B cell (primary cell): ENCODE measurements at regions of chr19 and their contacts with region 1.

Region 1: DNA sequence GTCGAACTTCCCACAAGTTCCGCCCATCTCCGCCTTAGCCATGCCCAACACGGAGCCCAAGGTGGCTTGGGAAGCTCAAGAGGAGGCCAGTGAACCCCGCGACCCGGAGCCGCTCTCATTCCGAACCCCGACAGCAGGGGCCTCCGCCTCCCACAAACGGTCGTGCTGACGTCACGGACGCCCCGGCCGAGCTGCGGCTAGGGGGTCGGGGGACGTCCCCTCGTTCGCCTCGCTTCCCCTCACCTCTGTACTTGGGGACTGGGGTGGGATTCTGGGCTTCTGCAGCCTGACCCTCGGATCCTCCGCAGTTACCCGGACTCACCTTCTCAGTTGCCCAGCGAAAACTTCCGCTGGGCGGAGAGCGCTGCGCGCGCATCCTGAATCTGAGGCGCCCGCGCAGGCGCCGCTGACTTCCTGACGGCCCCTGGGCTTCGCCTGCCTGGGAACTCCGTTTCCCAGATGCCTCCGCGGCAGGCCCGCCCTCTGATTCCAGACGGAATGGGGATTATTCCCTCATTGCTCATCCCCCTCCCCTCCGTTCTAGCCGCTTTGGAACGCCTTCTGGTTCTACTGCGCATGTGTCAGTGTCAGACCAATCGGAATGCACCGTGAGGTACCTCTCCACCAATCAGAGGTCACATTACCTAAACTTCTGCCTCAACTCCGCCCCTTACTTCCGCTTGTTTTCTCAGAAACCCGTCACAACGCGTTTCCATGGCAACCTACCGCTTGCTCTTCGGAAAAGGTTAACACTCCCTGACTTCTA is at the start of gene VRK3:
- DNase-seq: peak; percentile 100
- ATAC-seq: peak; percentile 86
- H3K4me3 ChIP-seq: peak within 1 kb of the TSS; percentile 76 to 96 (median 94)
- H3K4me3 Mint-ChIP-seq: peak within 1 kb of the TSS; percentile 94
- H3K27ac ChIP-seq: peak within 1 kb of the TSS; percentile 96 to 98
- H3K27ac Mint-ChIP-seq: peak within 1 kb of the TSS; percentile 97
- H3K4me1 ChIP-seq: peaks cover 15 to 36% of the 10 kb centered on the region in 2 donors
- H3K4me1 Mint-ChIP-seq: peaks cover 41% of the 10 kb centered on the region
- H3K27me3 ChIP-seq: no peaks in the 10 kb centered on the region
- H3K27me3 Mint-ChIP-seq: no peaks in the 10 kb centered on the region
- CTCF ChIP-seq: no peak
- total RNA-seq, gene VRK3: 112 and 123 TPM in 2 replicates

Region 2: GRCh38 chr19:48468775-48469288 is 1556.4 kb before region 1 on chr19:
- CTCF ChIA-PET with region 1: no interaction called
- POLR2A ChIA-PET with region 1: no interaction called
- intact Hi-C with region 1: loop called (anchors 2 kb)
- DNase-seq: peak; percentile 100
- ATAC-seq: peak; percentile 87
- H3K4me3 ChIP-seq: peak overlapping the region; percentile 8 to 90 (median 83)
- H3K4me3 Mint-ChIP-seq: peak overlapping the region; percentile 92
- H3K27ac ChIP-seq: peak overlapping the region; percentile 52 to 84
- H3K27ac Mint-ChIP-seq: peak overlapping the region; percentile 89
- H3K4me1 ChIP-seq: peaks cover 11 to 15% of the 10 kb centered on the region in 2 donors
- H3K4me1 Mint-ChIP-seq: peaks cover 17% of the 10 kb centered on the region
- H3K27me3 ChIP-seq: peaks cover 0 to 3% (median 0%) of the 10 kb centered on the region in 4 experiments
- H3K27me3 Mint-ChIP-seq: no peaks in the 10 kb centered on the region
- CTCF ChIP-seq: no peak

Region 3: GRCh38 chr19:48720613-48721296 is 1304.5 kb before region 1 on chr19:
- CTCF ChIA-PET with region 1: no interaction called
- POLR2A ChIA-PET with region 1: no interaction called
- intact Hi-C with region 1: loop called (anchors 10 kb)
- DNase-seq: peak; percentile 93
- ATAC-seq: peak; percentile 86
- H3K4me3 ChIP-seq: peak overlapping the region; percentile 47 to 91 (median 75)
- H3K4me3 Mint-ChIP-seq: peak overlapping the region; percentile 98
- H3K27ac ChIP-seq: peak overlapping the region; percentile 92 to 93
- H3K27ac Mint-ChIP-seq: peak overlapping the region; percentile 98
- H3K4me1 ChIP-seq: peaks cover 10 to 25% of the 10 kb centered on the region in 2 donors
- H3K4me1 Mint-ChIP-seq: peaks cover 21% of the 10 kb centered on the region
- H3K27me3 ChIP-seq: no peaks in the 10 kb centered on the region
- H3K27me3 Mint-ChIP-seq: no peaks in the 10 kb centered on the region
- CTCF ChIP-seq: no peak

Region 4: DNA sequence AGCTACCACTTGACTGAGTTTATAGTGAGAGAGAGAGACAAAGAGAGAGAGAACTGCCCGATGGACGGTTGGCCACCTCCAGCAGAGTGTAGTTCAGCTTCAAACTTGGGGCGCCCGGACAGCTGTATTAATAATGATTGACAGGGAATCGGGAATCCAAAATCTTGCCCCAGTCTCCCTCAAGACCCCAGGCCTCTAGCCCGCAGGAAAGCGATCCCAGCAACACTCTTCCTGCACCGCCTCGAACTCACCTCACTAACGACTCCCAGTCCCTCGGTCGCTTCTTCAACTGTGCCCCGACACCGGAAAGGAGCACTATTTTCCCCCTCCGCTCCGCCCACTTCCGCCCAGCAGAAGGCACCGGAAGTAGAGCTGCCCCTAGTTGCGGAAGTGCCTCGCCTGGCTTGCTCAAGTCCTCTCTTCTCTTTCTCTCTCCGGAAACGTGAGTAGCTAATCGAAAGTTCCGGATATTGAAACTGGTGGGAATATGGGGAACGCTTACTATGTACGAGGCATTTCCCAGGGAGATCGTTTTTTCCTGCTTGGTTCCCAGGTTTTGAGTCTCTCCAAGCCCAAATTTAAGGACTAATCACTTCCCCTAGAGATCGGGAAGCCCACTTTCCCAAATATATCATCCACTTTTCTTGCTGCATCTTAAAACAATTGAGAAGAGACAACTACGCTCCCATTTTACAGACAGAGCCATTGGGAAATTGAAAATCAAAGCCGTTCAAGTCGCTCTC is 444.8 kb before region 1 on chr19 and contains the start of gene NOSIP:
- CTCF ChIA-PET with region 1: no interaction called
- POLR2A ChIA-PET with region 1: no interaction called
- intact Hi-C with region 1: loop called (anchors 10 kb)
- DNase-seq: peak; percentile 97
- ATAC-seq: peak; percentile 95
- H3K4me3 ChIP-seq: peak within 1 kb of the TSS; percentile 61 to 92 (median 87)
- H3K4me3 Mint-ChIP-seq: peak within 1 kb of the TSS; percentile 89
- H3K27ac ChIP-seq: peak within 1 kb of the TSS; percentile 5 to 74
- H3K27ac Mint-ChIP-seq: peak within 1 kb of the TSS; percentile 88
- H3K4me1 ChIP-seq: peaks cover 16 to 23% of the 10 kb centered on the region in 2 donors
- H3K4me1 Mint-ChIP-seq: peaks cover 29% of the 10 kb centered on the region
- H3K27me3 ChIP-seq: no peaks in the 10 kb centered on the region
- H3K27me3 Mint-ChIP-seq: no peaks in the 10 kb centered on the region
- CTCF ChIP-seq: no peak
- total RNA-seq, gene NOSIP: 55.5 and 65.2 TPM in 2 replicates

Region 5: DNA sequence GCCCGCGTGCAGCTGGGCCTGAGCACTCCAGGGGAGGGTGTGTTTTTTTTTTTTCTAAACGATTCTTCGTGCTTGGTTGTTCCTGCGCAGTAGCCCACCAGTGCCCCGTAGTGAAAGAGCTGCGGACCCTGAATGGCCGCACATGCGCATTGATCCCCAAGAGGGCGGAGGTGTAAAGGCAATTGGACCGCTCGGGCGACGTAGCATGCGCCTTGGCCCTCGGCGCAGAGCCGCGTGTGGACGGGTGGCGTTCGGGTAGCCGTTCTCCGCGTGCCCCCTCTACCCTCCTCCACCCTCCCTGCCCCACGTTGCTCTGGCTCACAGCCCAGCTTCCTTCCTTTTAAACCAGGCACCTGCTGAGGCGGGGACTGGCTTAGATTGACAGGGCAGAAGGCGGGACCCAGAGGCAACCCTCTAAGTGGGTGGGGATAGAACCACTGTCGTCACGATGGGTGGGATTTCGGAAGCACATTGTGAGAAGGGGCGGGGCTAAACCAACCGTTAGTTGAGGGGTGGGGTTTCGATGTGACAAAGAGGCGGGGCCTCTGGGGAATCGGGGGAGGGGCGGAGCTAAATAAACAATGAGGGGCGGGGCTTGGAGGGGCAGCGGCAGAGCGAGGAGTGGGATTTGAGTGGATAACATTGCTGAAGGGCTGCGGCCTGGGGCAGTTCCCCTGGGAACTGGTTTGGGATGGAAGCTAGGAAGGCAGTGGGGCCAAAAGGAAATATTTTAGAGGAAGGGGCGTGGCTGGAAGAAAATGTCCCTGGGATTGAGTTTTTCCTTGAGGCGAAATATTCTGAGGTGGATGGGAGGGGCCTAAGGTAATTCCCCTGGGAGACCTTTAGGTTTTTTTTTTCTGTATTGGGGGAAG is 95.4 kb before region 1 on chr19:
- CTCF ChIA-PET with region 1: no interaction called
- POLR2A ChIA-PET with region 1: interaction called, 4 read pairs
- intact Hi-C with region 1: loop called (anchors 1 kb)
- DNase-seq: peak; percentile 99
- ATAC-seq: peak; percentile 84
- H3K4me3 ChIP-seq: peak overlapping the region; percentile 70 to 98 (median 89)
- H3K4me3 Mint-ChIP-seq: peak overlapping the region; percentile 100
- H3K27ac ChIP-seq: peak overlapping the region; percentile 80 to 97
- H3K27ac Mint-ChIP-seq: peak overlapping the region; percentile 98
- H3K4me1 ChIP-seq: peaks cover 20 to 32% of the 10 kb centered on the region in 2 donors
- H3K4me1 Mint-ChIP-seq: peaks cover 53% of the 10 kb centered on the region
- H3K27me3 ChIP-seq: no peaks in the 10 kb centered on the region
- H3K27me3 Mint-ChIP-seq: no peaks in the 10 kb centered on the region
- CTCF ChIP-seq: no peak

Region 6: GRCh38 chr19:50050384-50051224 is 25.4 kb after region 1 on chr19:
- CTCF ChIA-PET with region 1: interaction called, 3 read pairs
- POLR2A ChIA-PET with region 1: no interaction called
- intact Hi-C with region 1: loop called (anchors 1 kb)
- DNase-seq: peak; percentile 87
- ATAC-seq: peak; percentile 94
- H3K4me3 ChIP-seq: peak overlapping the region; percentile 22 to 65 (median 54)
- H3K4me3 Mint-ChIP-seq: peak overlapping the region; percentile 94
- H3K27ac ChIP-seq: peak overlapping the region; percentile 46 to 51
- H3K27ac Mint-ChIP-seq: peak overlapping the region; percentile 62
- H3K4me1 ChIP-seq: peaks cover 5 to 17% of the 10 kb centered on the region in 2 donors
- H3K4me1 Mint-ChIP-seq: peaks cover 15% of the 10 kb centered on the region
- H3K27me3 ChIP-seq: peaks cover 0 to 6% (median 0%) of the 10 kb centered on the region in 4 experiments
- H3K27me3 Mint-ChIP-seq: peaks cover 9% of the 10 kb centered on the region
- CTCF ChIP-seq: no peak